ENCODE measurements at regions of chr2 and their contacts with region 1.

Region 1: GRCh38 chr2:37389989-37390765 is 45.7 kb downstream of the QPCT start:
- DNase-seq: peak in 8 of 9 donors; percentile 30 to 72 (median 52)
- ATAC-seq: peak; percentile 94
- H3K4me3 ChIP-seq: peak overlapping the region; percentile 19
- H3K4me3 Mint-ChIP-seq: peak overlapping the region in 9 of 10 donors; percentile 43 to 68 (median 55)
- H3K27ac ChIP-seq: peak overlapping the region; percentile 8
- H3K27ac Mint-ChIP-seq: peak overlapping the region in 7 of 9 donors; percentile 72 to 84 (median 80)
- H3K4me1 ChIP-seq: peaks cover 25 to 27% of the 10 kb centered on the region in 2 donors
- H3K4me1 Mint-ChIP-seq: peaks cover 0 to 18% (median 0%) of the 10 kb centered on the region in 7 donors
- H3K27me3 ChIP-seq: no peaks in the 10 kb centered on the region
- H3K27me3 Mint-ChIP-seq: peaks cover 0 to 19% (median 0%) of the 10 kb centered on the region in 5 donors

Region 2: GRCh38 chr2:37168217-37168981 is 221.8 kb before region 1 on chr2:
- CTCF ChIA-PET with region 1: no interaction called
- POLR2A ChIA-PET with region 1: no interaction called
- intact Hi-C with region 1: loop called in 1 of 2 experiments (anchors 5 kb)
- DNase-seq: peak in 6 of 9 donors; percentile 14 to 52 (median 40)
- ATAC-seq: peak; percentile 80
- H3K4me3 ChIP-seq: no peak overlapping the region
- H3K4me3 Mint-ChIP-seq: no peak overlapping the region
- H3K27ac ChIP-seq: no peak overlapping the region
- H3K27ac Mint-ChIP-seq: peak overlapping the region in 1 of 9 donors; percentile 32
- H3K4me1 ChIP-seq: no peaks in the 10 kb centered on the region
- H3K4me1 Mint-ChIP-seq: no peaks in the 10 kb centered on the region
- H3K27me3 ChIP-seq: no peaks in the 10 kb centered on the region
- H3K27me3 Mint-ChIP-seq: peaks cover 0 to 3% (median 0%) of the 10 kb centered on the region in 5 donors

Region 3: DNA sequence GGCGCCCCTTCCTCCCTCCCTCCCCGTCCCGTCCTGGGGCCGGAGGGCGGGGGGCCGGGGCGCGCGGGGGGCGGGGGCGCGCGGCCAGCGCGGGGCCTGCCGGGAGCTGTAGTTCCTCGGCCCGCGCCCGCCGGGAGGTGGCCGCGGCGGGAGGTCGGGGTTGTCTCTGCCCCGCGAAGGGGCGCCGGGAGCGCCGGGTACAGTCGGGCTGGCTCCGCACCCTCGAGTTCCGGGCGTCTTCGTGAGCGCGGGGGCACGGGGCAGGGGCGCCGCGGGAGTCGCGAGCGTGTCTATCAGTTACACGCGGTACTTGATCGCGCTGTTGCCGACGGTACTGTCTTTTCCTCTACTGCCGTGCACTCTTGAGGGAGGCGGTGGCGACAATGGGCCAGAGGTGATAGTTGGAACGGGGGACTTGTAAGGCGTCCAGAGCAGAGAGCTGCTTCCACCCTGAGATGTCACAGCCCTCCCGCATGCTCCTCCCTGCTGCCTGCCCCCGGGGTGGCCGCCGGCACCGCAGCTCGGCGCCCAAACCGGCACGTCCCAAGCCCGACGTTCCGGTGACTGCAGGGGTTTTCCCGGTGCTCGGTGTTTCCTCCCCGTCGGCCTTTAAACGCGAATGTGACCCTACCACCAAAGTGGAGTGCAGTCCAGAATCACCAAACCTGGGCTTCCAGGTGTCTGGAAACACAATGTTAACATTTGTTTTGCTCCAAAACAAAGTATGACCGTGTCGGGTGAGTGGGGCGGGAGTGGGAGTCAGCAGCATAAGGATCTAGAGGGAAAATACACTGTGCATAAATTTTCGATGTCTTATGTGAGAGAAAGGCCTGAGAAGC is 65.2 kb before region 1 on chr2 and contains the start of gene PRKD3:
- CTCF ChIA-PET with region 1: interaction called, 3 read pairs
- POLR2A ChIA-PET with region 1: no interaction called
- intact Hi-C with region 1: loop called (anchors 1 kb)
- DNase-seq: peak; percentile 46 to 72 (median 65)
- ATAC-seq: peak; percentile 88
- H3K4me3 ChIP-seq: peak within 1 kb of the TSS; percentile 75
- H3K4me3 Mint-ChIP-seq: peak within 1 kb of the TSS; percentile 95 to 99 (median 98)
- H3K27ac ChIP-seq: peak within 1 kb of the TSS; percentile 73
- H3K27ac Mint-ChIP-seq: peak within 1 kb of the TSS; percentile 92 to 98 (median 95)
- H3K4me1 ChIP-seq: peaks cover 30 to 31% of the 10 kb centered on the region in 2 donors
- H3K4me1 Mint-ChIP-seq: peaks cover 18 to 48% (median 36%) of the 10 kb centered on the region in 7 donors
- H3K27me3 ChIP-seq: no peaks in the 10 kb centered on the region
- H3K27me3 Mint-ChIP-seq: peaks cover 0 to 56% (median 21%) of the 10 kb centered on the region in 5 donors
- total RNA-seq, gene PRKD3: 12.8 to 47.3 (median 46.4) TPM

Region 4: DNA sequence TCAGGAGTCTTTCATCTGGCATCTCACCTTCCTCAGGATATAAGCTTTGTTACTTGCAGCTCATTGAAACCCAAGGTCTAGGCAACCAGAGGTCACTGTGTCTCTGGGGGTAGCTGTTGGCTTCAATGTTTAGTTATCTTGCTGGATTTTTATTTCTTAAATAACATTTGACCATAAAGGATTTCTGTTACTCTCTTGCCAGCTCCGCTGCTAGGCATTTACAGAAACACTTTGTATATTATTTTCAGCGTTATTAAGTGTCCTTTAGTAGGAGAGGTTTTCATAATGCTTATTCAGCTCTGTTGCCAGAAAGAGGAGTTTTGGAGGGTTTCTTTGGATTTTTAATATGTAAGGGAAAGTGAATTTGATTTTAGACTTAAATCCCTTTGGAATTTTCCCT is 15.6 kb after region 1 on chr2:
- CTCF ChIA-PET with region 1: interaction called, 11 read pairs
- POLR2A ChIA-PET with region 1: interaction called, 4 read pairs
- intact Hi-C with region 1: no loop called
- DNase-seq: no peak
- ATAC-seq: no peak
- H3K4me3 ChIP-seq: no peak overlapping the region
- H3K4me3 Mint-ChIP-seq: no peak overlapping the region
- H3K27ac ChIP-seq: no peak overlapping the region
- H3K27ac Mint-ChIP-seq: no peak overlapping the region
- H3K4me1 ChIP-seq: no peaks in the 10 kb centered on the region
- H3K4me1 Mint-ChIP-seq: no peaks in the 10 kb centered on the region
- H3K27me3 ChIP-seq: no peaks in the 10 kb centered on the region
- H3K27me3 Mint-ChIP-seq: peaks cover 4 to 32% (median 9%) of the 10 kb centered on the region in 5 donors

Region 5: GRCh38 chr2:37427241-37427640 is 37.1 kb after region 1 on chr2:
- CTCF ChIA-PET with region 1: no interaction called
- POLR2A ChIA-PET with region 1: no interaction called
- intact Hi-C with region 1: no loop called
- DNase-seq: no peak
- ATAC-seq: no peak
- H3K4me3 ChIP-seq: no peak overlapping the region
- H3K4me3 Mint-ChIP-seq: no peak overlapping the region
- H3K27ac ChIP-seq: no peak overlapping the region
- H3K27ac Mint-ChIP-seq: no peak overlapping the region
- H3K4me1 ChIP-seq: no peaks in the 10 kb centered on the region
- H3K4me1 Mint-ChIP-seq: peaks cover 0 to 2% (median 0%) of the 10 kb centered on the region in 7 donors
- H3K27me3 ChIP-seq: no peaks in the 10 kb centered on the region
- H3K27me3 Mint-ChIP-seq: peaks cover 0 to 15% (median 0%) of the 10 kb centered on the region in 5 donors

Region 6: DNA sequence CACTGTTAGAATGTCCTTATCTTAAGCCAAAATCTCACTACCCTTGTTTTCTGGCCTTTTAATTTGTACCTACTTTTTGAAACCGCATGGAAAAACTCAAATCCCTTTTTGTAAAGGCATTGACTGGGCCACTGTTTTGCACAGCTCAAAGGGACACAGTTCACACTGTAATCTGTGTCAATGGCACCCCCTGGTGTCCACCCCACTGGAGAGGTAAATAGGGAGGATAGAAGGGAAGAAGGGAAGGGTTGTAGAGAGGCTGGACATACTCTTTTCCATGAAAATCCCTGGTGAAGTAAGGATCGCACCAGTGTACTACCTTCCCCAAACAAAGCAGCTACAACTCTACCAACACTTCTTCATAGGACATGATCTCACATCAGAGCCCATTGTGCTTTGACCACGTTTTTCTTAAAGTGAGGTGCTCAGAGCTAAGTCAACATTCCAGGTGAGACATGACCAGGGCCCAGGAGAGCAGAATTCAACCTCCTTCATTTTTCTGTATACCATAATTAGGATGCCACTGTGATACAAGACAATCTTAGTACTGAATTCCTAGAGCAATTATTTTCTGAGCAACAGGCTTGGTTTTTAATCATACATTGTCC is 442.5 kb after region 1 on chr2:
- CTCF ChIA-PET with region 1: interaction called, 68 read pairs
- POLR2A ChIA-PET with region 1: no interaction called
- intact Hi-C with region 1: no loop called
- DNase-seq: peak; percentile 56 to 82 (median 72)
- ATAC-seq: peak; percentile 87
- H3K4me3 ChIP-seq: no peak overlapping the region
- H3K4me3 Mint-ChIP-seq: no peak overlapping the region
- H3K27ac ChIP-seq: no peak overlapping the region
- H3K27ac Mint-ChIP-seq: no peak overlapping the region
- H3K4me1 ChIP-seq: no peaks in the 10 kb centered on the region
- H3K4me1 Mint-ChIP-seq: peaks cover 0 to 15% (median 5%) of the 10 kb centered on the region in 7 donors
- H3K27me3 ChIP-seq: no peaks in the 10 kb centered on the region
- H3K27me3 Mint-ChIP-seq: no peaks in the 10 kb centered on the region

Region 7: GRCh38 chr2:38274286-38275276 is 884.4 kb after region 1 on chr2:
- CTCF ChIA-PET with region 1: interaction called, 5 read pairs
- POLR2A ChIA-PET with region 1: no interaction called
- intact Hi-C with region 1: loop called in 1 of 2 experiments (anchors 10 kb)
- DNase-seq: peak in 7 of 9 donors; percentile 17 to 44 (median 32)
- ATAC-seq: peak; percentile 77
- H3K4me3 ChIP-seq: no peak overlapping the region
- H3K4me3 Mint-ChIP-seq: no peak overlapping the region
- H3K27ac ChIP-seq: no peak overlapping the region
- H3K27ac Mint-ChIP-seq: peak overlapping the region in 1 of 9 donors; percentile 1
- H3K4me1 ChIP-seq: no peaks in the 10 kb centered on the region
- H3K4me1 Mint-ChIP-seq: peaks cover 0 to 7% (median 0%) of the 10 kb centered on the region in 7 donors
- H3K27me3 ChIP-seq: no peaks in the 10 kb centered on the region
- H3K27me3 Mint-ChIP-seq: peaks cover 0 to 5% (median 0%) of the 10 kb centered on the region in 5 donors